ENCODE measurements at regions of chr11 and their contacts with region 1.

Region 1: GRCh38 chr11:62008193-62008592 is 40.8 kb upstream of the FTH1 start:
- DNase-seq: no peak

Region 2: DNA sequence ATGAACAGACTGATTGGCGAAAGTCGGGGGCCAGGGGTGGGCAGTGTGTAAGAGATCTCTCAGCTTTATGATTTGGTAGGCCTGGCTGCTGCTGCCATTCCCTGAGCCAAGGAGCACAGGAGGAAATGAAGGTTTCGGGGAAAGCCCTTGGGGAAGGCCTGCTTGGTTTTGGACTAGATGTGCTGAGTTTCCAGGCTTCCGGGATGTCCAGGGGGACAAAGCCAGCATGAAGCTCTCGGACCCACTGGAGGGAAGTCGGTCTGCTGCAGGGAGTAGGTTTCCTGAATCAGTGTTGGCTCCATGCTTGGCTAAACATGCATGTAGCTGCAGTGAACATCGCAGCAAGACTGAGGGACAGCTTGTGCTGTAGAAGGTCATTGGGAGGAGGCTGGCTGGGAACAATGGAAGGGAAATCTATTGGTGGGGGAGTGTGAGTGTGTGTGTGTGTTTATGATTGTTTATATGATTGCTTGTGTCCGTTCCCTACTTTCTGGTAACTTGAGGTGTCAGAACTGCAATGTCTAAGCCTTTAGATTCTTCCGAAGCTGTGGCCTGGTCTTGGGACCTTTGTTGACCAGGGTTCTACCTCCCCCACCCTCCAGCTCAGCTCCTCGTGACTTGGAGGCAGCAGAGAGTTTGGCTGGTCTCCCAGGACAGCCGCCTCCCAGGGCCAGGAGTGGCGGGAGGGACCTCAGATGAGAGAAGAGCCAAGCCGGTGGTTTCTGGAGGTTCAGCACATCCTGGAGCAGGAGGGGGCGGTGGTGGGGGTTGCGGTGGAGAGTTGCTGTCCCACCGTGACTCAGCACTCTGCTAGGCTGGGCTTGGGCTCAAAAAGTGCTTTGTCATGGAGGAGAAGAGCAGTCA is 36.7 kb before region 1 on chr11:
- intact Hi-C with region 1: loop called (anchors 5 kb)
- DNase-seq: peak; percentile 88 to 99 (median 94)

Measured in head of caudate nucleus (tissue), 42 donors.